Activated CD4-positive, alpha-beta memory T cell treated with anti-CD3 and anti-CD28 coated beads for 36 hours (primary cell): ENCODE measurements at regions of chr11 and their contacts with region 1.

Region 1: DNA sequence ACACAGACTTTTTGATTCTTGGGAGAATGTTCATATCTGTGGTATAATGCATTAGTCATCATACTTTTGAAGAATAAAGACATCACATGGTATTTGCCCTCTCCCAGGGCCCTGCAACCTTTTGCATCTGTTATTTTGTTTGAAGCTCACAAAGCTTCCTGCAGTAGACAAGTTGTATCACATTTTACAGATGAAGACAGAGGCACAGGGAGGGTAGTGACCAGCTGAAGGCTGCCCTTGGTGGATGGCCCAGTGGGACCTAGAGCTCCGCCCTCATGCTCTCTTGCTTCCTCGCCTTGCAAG is 66.4 kb downstream of the UBASH3B start:
- DNase-seq: peak; percentile 32
- H3K4me3 Mint-ChIP-seq: no peak overlapping the region
- H3K27ac Mint-ChIP-seq: no peak overlapping the region
- H3K4me1 Mint-ChIP-seq: peaks cover 56% of the 10 kb centered on the region
- H3K27me3 Mint-ChIP-seq: no peaks in the 10 kb centered on the region

Region 2: DNA sequence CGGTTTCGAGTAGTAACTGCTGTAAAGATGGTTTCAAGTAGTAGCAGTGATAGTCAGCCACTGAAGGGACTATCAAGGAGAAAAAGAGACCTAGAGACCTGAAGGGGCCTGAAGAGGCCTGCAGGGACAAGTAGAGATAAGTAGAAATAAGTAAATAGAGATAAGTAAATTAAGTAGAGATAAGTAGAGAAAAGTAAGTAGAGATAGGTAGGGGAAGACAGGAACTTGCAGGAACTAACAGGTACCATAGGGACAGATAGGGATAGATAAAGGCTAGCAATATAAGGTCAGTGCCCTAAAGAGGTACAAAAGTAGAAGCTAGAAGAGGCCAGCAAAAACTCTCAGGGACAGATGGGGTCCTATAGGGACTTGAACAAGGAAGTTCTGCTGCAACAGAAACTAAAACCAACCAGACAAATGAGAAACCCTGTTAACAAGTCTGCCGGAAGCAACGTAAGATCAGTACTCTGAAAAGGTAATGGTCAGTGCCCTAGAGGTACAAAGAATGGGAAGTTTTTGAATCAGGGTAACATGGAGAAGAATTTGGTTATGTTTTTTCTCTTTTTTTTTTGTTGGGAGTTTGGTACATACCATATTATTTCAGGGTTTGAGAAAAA is 1438.9 kb before region 1 on chr11:
- CTCF ChIA-PET with region 1: no interaction called
- POLR2A ChIA-PET with region 1: no interaction called
- intact Hi-C with region 1: no loop called
- DNase-seq: no peak
- H3K4me3 Mint-ChIP-seq: no peak overlapping the region
- H3K27ac Mint-ChIP-seq: no peak overlapping the region
- H3K4me1 Mint-ChIP-seq: no peaks in the 10 kb centered on the region
- H3K27me3 Mint-ChIP-seq: peaks cover 27% of the 10 kb centered on the region

Region 3: GRCh38 chr11:122578168-122578825 is 143.6 kb before region 1 on chr11:
- CTCF ChIA-PET with region 1: no interaction called
- POLR2A ChIA-PET with region 1: no interaction called
- intact Hi-C with region 1: no loop called
- DNase-seq: no peak
- H3K4me3 Mint-ChIP-seq: no peak overlapping the region
- H3K27ac Mint-ChIP-seq: no peak overlapping the region
- H3K4me1 Mint-ChIP-seq: peaks cover 8% of the 10 kb centered on the region
- H3K27me3 Mint-ChIP-seq: peaks cover 2% of the 10 kb centered on the region

Region 4: GRCh38 chr11:122617297-122617696 is 104.6 kb before region 1 on chr11:
- CTCF ChIA-PET with region 1: no interaction called
- POLR2A ChIA-PET with region 1: no interaction called
- intact Hi-C with region 1: no loop called
- DNase-seq: no peak
- H3K4me3 Mint-ChIP-seq: no peak overlapping the region
- H3K27ac Mint-ChIP-seq: no peak overlapping the region
- H3K4me1 Mint-ChIP-seq: no peaks in the 10 kb centered on the region
- H3K27me3 Mint-ChIP-seq: no peaks in the 10 kb centered on the region

Region 5: DNA sequence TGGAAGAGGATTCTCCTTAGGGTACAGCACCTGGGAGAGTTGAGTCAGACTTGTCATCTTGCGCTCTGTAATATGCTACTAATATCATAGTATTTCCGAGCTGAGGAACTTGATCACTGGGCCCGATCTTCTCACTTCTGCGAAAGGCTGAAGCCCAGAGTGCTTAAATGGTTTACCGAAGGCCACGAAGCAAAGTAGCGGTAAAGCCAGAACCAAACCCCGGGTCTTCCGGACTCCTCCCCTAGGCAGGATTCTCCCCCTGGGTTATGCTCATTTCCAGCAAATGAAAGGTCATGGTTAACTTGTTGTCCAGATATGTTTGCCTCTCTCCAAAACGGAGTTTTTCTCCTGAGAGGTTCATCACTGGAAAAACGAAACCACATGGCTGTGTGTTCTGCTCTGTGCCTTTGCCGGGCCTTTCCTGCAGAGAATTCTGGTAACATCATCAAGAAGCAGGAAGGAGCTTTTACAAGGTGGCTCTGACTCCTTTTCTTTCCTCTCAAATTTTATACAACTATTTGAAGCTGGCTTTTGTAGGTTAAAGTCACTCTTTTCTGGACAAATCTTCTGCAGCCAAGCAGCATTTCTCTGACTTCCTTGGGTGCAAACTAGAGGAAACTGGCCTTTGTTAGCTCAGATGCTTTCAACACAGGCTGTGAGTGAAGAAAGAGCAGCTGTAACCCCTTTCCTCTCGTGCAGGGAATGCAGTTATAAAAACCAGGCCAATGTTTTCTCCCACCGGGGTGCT is 30.9 kb before region 1 on chr11:
- CTCF ChIA-PET with region 1: interaction called, 6 read pairs
- POLR2A ChIA-PET with region 1: interaction called, 3 read pairs
- intact Hi-C with region 1: loop called (anchors 1 kb)
- DNase-seq: peak; percentile 32
- H3K4me3 Mint-ChIP-seq: peak overlapping the region; percentile 56
- H3K27ac Mint-ChIP-seq: peak overlapping the region; percentile 76
- H3K4me1 Mint-ChIP-seq: peaks cover 76% of the 10 kb centered on the region
- H3K27me3 Mint-ChIP-seq: no peaks in the 10 kb centered on the region

Region 6: DNA sequence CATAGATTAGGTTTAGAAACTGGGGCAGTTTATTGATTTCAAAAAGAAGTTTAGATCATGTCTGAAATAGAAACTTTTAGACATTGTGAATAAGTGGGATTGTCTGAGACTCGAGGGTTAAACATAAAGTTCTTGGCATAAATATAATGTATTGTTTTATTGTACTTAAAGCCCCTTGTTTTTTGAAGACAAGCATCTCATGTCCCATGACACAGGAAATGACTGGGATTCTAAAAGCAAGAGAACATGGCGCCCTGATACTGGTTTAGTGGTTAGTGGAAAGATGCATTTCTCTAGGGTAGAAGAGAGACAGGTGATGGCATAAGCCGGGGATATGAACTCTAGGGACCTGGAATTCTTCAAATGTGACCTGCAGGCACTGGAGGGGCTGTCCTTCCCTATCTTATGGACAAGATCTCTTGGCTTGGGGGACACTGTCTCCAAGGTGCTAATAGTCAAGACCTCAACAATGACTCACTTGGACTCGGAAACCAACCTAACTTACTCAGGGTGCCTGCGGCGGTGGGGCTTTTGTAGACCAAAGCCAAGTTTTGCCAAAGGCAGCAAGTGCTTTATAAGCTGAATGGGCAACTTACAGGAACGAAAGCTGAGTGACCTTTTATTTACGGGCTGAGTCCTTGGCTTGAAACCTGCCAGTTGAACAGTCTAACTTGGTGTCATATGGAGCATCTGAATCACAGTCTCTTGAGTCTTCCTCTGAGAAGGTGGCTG is 18.2 kb before region 1 on chr11:
- CTCF ChIA-PET with region 1: no interaction called
- POLR2A ChIA-PET with region 1: no interaction called
- intact Hi-C with region 1: loop called (anchors 2 kb)
- DNase-seq: peak; percentile 58
- H3K4me3 Mint-ChIP-seq: no peak overlapping the region
- H3K27ac Mint-ChIP-seq: peak overlapping the region; percentile 91
- H3K4me1 Mint-ChIP-seq: peaks cover 50% of the 10 kb centered on the region
- H3K27me3 Mint-ChIP-seq: no peaks in the 10 kb centered on the region

Region 7: DNA sequence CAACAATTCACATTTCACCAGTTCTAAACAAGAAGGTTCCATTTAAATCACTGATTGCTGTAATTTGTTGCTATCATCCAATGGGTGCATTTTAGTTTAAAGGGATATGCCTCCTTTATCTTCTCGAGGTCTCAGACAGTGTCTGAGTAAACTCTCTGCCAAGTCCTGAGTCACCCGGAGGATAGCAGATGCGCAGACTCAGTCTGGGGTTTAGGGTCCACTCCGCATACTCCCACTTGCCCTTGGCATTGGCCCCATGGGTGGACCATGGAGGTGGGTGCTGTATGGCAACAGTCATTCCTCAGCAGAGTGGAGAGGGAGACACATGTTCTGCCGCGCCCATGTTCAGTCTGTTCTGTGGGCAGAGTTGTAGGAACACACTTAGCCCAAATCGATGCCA is 51.0 kb after region 1 on chr11:
- CTCF ChIA-PET with region 1: no interaction called
- POLR2A ChIA-PET with region 1: no interaction called
- intact Hi-C with region 1: no loop called
- DNase-seq: no peak
- H3K4me3 Mint-ChIP-seq: no peak overlapping the region
- H3K27ac Mint-ChIP-seq: no peak overlapping the region
- H3K4me1 Mint-ChIP-seq: peaks cover 34% of the 10 kb centered on the region
- H3K27me3 Mint-ChIP-seq: peaks cover 2% of the 10 kb centered on the region